Activated naive CD4-positive, alpha-beta T cell treated with anti-CD3 and anti-CD28 coated beads for 36 hours (primary cell): ENCODE measurements at regions of chr11 and their contacts with region 1.

Region 1: DNA sequence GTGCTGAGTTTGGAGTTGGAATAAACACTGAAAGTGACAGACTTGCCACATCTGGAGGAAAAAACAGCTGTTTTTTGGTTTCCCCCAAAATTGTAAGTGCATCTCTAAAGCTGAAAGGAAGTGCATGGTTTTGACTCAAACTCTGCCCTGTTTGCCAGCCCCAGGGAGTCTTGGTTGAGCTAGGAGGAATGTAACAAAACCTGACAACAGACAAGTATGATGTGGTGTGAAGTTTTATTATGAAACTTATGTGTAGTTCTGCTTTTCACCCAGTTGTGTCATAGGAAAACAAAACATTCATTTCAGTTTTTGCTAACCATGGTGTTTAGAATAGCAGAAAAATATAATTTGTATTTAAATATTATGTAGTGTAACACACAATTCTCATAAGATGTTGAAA is 31.7 kb upstream of the PDE3B start:
- DNase-seq: peak; percentile 54
- H3K4me3 Mint-ChIP-seq: no peak overlapping the region
- H3K27ac Mint-ChIP-seq: peak overlapping the region; percentile 74
- H3K4me1 Mint-ChIP-seq: peaks cover 32% of the 10 kb centered on the region
- H3K27me3 Mint-ChIP-seq: no peaks in the 10 kb centered on the region

Region 2: DNA sequence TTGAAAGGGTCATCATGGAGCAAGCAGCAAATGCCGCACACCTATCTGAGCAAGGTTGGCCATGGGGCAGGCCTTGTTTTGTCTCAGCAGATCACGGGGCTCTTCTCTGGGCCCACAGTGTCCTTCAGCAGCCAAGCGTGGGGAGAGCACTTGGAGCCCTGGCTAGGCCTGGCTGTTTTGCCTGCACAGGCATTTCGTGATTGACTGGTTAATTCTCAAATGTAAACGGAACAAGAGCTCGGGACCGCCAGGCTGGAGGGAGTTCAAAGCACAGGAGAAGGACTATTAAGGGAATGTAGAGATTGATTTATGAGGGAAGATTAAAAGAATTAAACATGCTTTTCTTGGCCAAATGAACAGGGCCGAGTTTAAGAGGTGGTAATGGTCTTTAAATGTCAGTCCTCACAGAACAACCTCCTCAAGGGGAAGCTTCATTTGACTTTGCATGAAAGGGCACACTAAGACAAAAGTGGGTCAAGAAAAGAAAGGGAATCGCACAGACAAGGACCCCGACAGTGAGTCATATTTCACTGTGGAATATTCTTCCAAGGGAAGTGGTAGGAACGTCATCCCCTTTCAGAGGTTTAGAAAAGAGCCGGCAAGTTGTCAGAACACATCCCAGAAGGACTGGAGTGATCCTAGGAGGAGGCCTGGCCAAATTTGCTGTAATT is 628.7 kb before region 1 on chr11:
- CTCF ChIA-PET with region 1: no interaction called
- intact Hi-C with region 1: no loop called
- DNase-seq: no peak
- H3K4me3 Mint-ChIP-seq: no peak overlapping the region
- H3K27ac Mint-ChIP-seq: no peak overlapping the region
- H3K4me1 Mint-ChIP-seq: no peaks in the 10 kb centered on the region
- H3K27me3 Mint-ChIP-seq: no peaks in the 10 kb centered on the region

Region 3: GRCh38 chr11:14554959-14555358 is 57.0 kb before region 1 on chr11:
- CTCF ChIA-PET with region 1: no interaction called
- intact Hi-C with region 1: loop called (anchors 5 kb)
- DNase-seq: peak; percentile 38
- H3K4me3 Mint-ChIP-seq: no peak overlapping the region
- H3K27ac Mint-ChIP-seq: peak overlapping the region; percentile 63
- H3K4me1 Mint-ChIP-seq: peaks cover 35% of the 10 kb centered on the region
- H3K27me3 Mint-ChIP-seq: no peaks in the 10 kb centered on the region

Region 4: GRCh38 chr11:14636119-14636518 is 24.2 kb after region 1 on chr11:
- CTCF ChIA-PET with region 1: no interaction called
- intact Hi-C with region 1: loop called (anchors 2 kb)
- DNase-seq: peak; percentile 32
- H3K4me3 Mint-ChIP-seq: peak overlapping the region; percentile 1
- H3K27ac Mint-ChIP-seq: peak overlapping the region; percentile 68
- H3K4me1 Mint-ChIP-seq: peaks cover 61% of the 10 kb centered on the region
- H3K27me3 Mint-ChIP-seq: no peaks in the 10 kb centered on the region